ENCODE measurements at regions of chr9 and their contacts with region 1.

Region 1: DNA sequence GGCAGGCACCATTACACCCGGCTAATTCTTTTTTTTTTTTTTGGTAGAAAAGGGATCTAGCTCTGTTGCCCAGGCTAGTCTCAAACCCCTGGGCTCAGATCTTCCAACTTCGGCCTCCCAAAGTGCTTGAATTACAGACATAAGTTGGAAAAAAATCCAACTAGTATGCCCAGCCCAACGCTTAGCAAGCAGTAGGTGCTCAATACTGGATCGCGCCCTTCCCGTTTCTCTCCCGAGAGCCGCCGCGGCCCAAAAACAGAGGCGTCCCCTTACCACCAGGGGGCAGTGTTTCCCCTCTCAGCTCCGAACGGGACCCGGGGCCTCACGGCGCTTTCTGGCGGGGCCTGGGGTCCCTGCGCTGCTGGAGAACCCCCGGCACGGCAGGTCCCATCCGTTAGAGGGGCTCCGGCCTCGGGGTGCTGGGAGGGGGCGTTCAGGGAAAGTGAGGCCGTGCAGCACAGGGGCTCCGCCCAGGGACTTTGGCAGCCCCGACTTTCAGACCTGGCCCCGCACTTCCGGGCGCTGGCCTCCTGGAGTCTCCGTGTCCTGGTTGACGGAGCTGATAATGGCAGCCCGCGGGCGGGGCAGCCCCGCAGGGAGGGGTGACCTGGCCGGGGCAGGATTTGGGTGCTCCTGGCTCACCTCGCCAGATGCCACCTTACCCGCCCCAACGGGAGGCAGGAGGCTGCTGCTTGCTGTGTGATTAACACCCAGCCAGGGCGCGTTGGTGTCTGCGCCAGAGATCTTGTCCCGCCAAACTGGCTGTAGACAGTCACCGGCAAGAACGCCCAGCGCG is 15.2 kb downstream of the PTGES start:
- DNase-seq: peak; percentile 55
- ATAC-seq: peak; percentile 97
- H3K4me3 ChIP-seq: peak overlapping the region; percentile 30
- H3K27ac ChIP-seq: peak overlapping the region; percentile 68
- H3K4me1 ChIP-seq: peaks cover 3% of the 10 kb centered on the region
- H3K27me3 ChIP-seq: no peaks in the 10 kb centered on the region
- CTCF ChIP-seq: peak; percentile 89
- POLR2A ChIP-seq: 0 out of 2 replicates have a peak, but pooled peaks have one; percentile 20
- RAD21 ChIP-seq: peak; percentile 86

Region 2: DNA sequence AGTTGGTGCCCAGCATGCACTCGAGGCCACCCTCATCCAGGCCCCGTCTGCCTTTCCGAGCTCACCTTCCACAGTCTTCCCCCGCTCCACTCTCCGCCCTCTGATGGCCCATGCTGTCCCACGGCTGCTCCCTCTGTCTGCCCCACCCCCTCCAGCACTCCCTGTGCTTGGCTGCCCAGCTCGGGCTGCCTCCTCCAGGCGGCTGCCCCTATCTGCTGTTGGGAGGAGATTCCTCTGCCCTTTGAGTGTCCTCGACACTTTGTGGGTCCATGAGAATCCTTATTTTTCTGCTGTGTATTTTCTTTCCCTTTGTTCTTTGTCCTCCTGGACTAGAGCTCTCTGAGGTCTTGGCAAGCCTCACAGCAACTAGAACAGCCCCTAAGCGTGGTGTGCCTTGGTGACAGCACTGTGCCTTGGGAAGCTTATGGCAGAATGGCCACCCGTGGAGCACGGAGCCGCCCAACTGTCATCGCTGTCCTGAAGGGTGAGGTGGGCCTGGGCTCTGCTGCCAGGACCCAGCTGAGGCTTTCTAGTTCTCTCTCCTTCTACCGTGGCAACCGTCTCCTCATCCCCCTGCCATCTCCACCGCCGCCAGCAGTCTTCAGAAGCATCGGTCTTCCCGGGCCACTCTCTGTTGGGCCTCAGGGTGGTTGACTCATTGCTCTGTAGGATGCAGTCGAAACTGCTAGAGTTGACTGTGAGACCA is 106.6 kb before region 1 on chr9:
- CTCF ChIA-PET with region 1: no interaction called
- POLR2A ChIA-PET with region 1: no interaction called
- dilution Hi-C with region 1: no loop called
- in situ Hi-C with region 1: no loop called
- intact Hi-C with region 1: no loop called
- DNase-seq: peak; percentile 49
- ATAC-seq: no peak; the same call in 1 of the 2 replicates
- H3K4me3 ChIP-seq: no peak overlapping the region
- H3K27ac ChIP-seq: peak overlapping the region; percentile 43; the same call in 1 of the 2 replicates
- H3K4me1 ChIP-seq: peaks cover 40% of the 10 kb centered on the region
- H3K27me3 ChIP-seq: no peaks in the 10 kb centered on the region
- CTCF ChIP-seq: no peak
- POLR2A ChIP-seq: no peak
- RAD21 ChIP-seq: no peak

Region 3: DNA sequence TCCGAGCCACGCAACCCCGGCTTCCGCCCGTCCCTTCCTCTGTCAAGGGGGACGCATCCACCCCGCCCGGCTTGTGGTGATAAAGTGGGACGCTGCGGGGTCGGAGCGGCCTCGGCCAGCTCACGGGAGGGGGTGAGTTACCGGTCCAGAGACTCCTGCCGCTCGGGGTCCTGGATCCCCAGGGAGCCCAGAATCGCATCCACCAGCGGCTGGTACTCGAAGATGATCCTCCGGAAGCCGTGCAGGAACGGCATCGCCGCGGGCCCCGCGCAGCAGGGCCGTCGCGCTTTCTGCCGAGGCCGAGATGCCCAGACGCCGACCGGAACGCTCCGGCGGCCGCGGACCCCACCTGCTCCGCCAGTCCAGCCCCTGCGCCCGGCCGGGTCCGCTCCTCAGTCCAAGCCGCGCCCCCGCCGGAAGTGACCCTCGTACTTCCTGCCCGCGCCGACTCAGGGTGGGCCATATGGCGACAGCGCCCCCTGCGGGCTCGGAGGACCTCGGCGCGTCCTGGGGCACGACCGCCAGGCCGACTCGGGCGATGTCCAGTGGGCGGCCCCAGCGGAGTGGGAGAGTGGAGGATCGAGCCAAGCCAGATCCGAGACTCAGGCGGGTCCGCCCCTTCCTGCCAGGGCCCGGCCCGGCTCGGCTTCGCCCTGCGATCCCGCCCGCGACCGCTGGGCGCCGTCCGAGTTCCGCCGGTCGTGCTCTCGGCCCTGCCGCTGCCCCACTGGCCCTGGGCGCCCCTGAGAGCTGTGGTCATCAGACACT is 95.7 kb before region 1 on chr9 and contains the start of gene ASB6:
- CTCF ChIA-PET with region 1: interaction called, 4 read pairs
- POLR2A ChIA-PET with region 1: no interaction called
- dilution Hi-C with region 1: no loop called
- in situ Hi-C with region 1: no loop called
- intact Hi-C with region 1: loop called (anchors 1 kb)
- DNase-seq: peak; percentile 96
- ATAC-seq: peak; percentile 94
- H3K4me3 ChIP-seq: peak within 1 kb of the TSS; percentile 81
- H3K27ac ChIP-seq: peak within 1 kb of the TSS; percentile 92
- H3K4me1 ChIP-seq: peaks cover 15% of the 10 kb centered on the region
- H3K27me3 ChIP-seq: no peaks in the 10 kb centered on the region
- CTCF ChIP-seq: peak; percentile 98
- POLR2A ChIP-seq: peak; percentile 85
- RAD21 ChIP-seq: peak; percentile 96
- total RNA-seq, gene ASB6: 9.4 and 9.7 TPM in 2 replicates

Region 4: GRCh38 chr9:129726322-129727160 is 11.1 kb before region 1 on chr9:
- CTCF ChIA-PET with region 1: interaction called, 13 read pairs
- POLR2A ChIA-PET with region 1: no interaction called
- dilution Hi-C with region 1: no loop called
- in situ Hi-C with region 1: no loop called
- intact Hi-C with region 1: no loop called
- DNase-seq: peak; percentile 78
- ATAC-seq: peak; percentile 96
- H3K4me3 ChIP-seq: no peak overlapping the region
- H3K27ac ChIP-seq: peak overlapping the region; percentile 42; the same call in 1 of the 2 replicates
- H3K4me1 ChIP-seq: peaks cover 8% of the 10 kb centered on the region; the same call in 1 of the 2 replicates
- H3K27me3 ChIP-seq: no peaks in the 10 kb centered on the region
- CTCF ChIP-seq: peak; percentile 88
- POLR2A ChIP-seq: no peak
- RAD21 ChIP-seq: peak; percentile 77

Region 5: DNA sequence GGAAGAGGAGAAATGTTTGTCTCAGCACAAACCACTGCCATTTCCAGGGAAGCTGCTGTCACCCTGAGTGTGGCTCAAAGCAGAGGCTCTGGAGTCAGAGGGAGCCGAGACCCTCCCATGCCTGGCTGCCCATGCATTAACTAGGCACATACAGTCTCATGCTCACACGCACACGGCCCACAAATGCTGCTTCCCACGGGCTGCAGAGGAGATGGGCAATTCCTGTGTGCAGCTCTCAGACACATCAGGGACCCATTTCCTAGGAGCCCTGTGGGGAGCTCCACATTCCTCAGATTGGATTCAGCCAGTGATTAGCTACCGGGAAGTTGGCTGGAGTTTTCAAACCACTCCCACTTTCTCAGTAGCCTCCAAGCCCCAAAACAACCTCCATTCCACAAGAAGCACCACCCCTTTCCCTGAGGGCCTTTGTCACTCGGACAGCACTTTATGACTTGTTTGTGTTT is 24.3 kb after region 1 on chr9:
- CTCF ChIA-PET with region 1: interaction called, 13 read pairs
- POLR2A ChIA-PET with region 1: no interaction called
- dilution Hi-C with region 1: no loop called
- in situ Hi-C with region 1: no loop called
- intact Hi-C with region 1: no loop called
- DNase-seq: peak; percentile 83
- ATAC-seq: peak; percentile 66
- H3K4me3 ChIP-seq: no peak overlapping the region
- H3K27ac ChIP-seq: peak overlapping the region; percentile 98
- H3K4me1 ChIP-seq: peaks cover 18% of the 10 kb centered on the region
- H3K27me3 ChIP-seq: no peaks in the 10 kb centered on the region
- CTCF ChIP-seq: no peak
- POLR2A ChIP-seq: no peak
- RAD21 ChIP-seq: no peak

Region 6: DNA sequence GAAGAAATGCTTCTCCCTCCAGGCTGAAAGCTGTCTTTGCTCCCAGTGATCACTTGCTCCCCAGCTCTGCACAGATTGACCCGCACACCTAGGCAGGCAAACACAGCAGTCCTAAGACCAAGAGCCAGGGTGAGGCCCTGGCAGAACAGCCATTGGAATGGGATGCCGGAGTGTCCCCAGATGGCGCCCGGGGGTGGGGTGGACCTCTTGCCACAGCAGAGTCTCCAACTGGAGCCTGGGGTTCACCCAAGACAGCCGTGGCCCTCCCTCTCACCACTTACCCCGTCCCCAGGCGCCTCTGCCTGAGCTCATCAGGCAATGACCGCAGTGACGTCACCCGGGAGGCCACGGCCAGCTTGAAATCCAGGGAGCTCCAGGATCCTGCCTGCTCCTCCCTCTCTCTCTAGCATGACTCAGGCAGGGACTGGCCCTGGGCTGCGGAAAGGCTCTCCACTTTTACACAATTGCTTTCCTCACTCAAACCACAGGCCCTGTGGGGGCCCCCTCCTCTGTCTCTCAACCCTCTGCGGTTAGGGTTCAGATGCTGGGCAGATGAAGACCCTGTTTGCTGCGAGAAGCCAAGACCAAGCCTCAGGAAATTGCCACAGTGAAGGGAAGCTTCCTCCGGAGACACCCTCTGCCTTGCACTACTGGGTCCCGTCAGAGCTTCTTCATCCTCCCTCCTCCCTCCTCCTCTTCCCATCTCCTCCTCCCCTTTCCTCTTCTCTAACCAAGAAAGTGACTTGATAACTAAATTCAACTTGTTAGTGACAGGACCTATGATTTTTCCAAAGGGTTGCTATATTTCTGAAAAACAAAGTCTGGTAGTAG is 39.5 kb after region 1 on chr9:
- CTCF ChIA-PET with region 1: interaction called, 17 read pairs
- POLR2A ChIA-PET with region 1: no interaction called
- dilution Hi-C with region 1: no loop called
- in situ Hi-C with region 1: loop called (anchors 5 kb)
- intact Hi-C with region 1: no loop called
- DNase-seq: peak; percentile 100
- ATAC-seq: peak; percentile 95
- H3K4me3 ChIP-seq: peak overlapping the region; percentile 1; the same call in 1 of the 2 replicates
- H3K27ac ChIP-seq: peak overlapping the region; percentile 85
- H3K4me1 ChIP-seq: peaks cover 21% of the 10 kb centered on the region
- H3K27me3 ChIP-seq: no peaks in the 10 kb centered on the region
- CTCF ChIP-seq: no peak
- POLR2A ChIP-seq: peak; percentile 29
- RAD21 ChIP-seq: peak; percentile 30

Region 7: GRCh38 chr9:129783516-129784361 is 46.1 kb after region 1 on chr9:
- CTCF ChIA-PET with region 1: interaction called, 14 read pairs
- POLR2A ChIA-PET with region 1: no interaction called
- dilution Hi-C with region 1: no loop called
- in situ Hi-C with region 1: loop called (anchors 5 kb)
- intact Hi-C with region 1: loop called (anchors 1 kb)
- DNase-seq: peak; percentile 75
- ATAC-seq: peak; percentile 96
- H3K4me3 ChIP-seq: no peak overlapping the region
- H3K27ac ChIP-seq: no peak overlapping the region
- H3K4me1 ChIP-seq: peaks cover 3% of the 10 kb centered on the region; the same call in 1 of the 2 replicates
- H3K27me3 ChIP-seq: peaks cover 10% of the 10 kb centered on the region
- CTCF ChIP-seq: peak; percentile 96
- POLR2A ChIP-seq: peak; percentile 66
- RAD21 ChIP-seq: peak; percentile 100

Region 8: GRCh38 chr9:130088051-130088450 is 350.4 kb after region 1 on chr9:
- CTCF ChIA-PET with region 1: no interaction called
- POLR2A ChIA-PET with region 1: no interaction called
- dilution Hi-C with region 1: no loop called
- in situ Hi-C with region 1: no loop called
- intact Hi-C with region 1: no loop called
- DNase-seq: no peak
- ATAC-seq: no peak
- H3K4me3 ChIP-seq: no peak overlapping the region
- H3K27ac ChIP-seq: no peak overlapping the region
- H3K4me1 ChIP-seq: no peaks in the 10 kb centered on the region
- H3K27me3 ChIP-seq: no peaks in the 10 kb centered on the region
- CTCF ChIP-seq: no peak
- POLR2A ChIP-seq: no peak
- RAD21 ChIP-seq: no peak

Region 9: DNA sequence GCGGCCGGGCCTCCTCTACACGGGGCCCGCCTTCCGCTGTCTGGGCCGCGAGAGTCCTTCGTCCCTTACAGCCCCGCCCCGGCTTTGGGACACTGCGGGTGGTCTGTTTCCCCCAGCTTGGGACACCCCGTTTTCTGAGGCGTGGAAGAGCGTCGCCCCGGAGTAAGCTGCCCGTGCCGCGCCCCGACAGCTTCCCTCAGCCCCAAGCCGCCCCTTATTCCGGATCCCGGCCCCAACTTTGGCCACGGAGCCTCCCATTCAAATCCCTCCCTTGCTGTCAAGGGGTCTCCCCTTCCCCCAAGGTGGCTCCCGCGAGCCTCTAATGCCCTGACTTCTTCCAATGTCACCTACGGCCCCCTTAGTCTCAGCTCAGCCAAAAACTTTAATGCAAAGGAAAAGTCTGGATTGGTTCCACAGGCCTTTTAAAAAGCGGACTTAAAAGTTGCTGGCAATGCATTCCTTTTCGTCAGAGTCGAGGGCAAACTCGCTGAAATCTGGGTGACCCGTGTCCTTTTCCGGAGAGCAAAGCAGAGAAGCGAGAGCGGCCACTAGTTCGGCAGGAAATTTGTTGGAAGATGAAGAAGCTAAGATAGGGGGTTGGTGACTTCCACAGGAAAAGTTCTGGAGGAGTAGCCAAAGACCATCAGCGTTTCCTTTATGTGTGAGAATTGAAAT is 975.7 kb after region 1 on chr9:
- CTCF ChIA-PET with region 1: no interaction called
- POLR2A ChIA-PET with region 1: no interaction called
- dilution Hi-C with region 1: no loop called
- in situ Hi-C with region 1: no loop called
- intact Hi-C with region 1: no loop called
- DNase-seq: peak; percentile 34
- ATAC-seq: peak; percentile 0; the same call in 1 of the 2 replicates
- H3K4me3 ChIP-seq: peak overlapping the region; percentile 60
- H3K27ac ChIP-seq: peak overlapping the region; percentile 88
- H3K4me1 ChIP-seq: peaks cover 2% of the 10 kb centered on the region; the same call in 1 of the 2 replicates
- H3K27me3 ChIP-seq: no peaks in the 10 kb centered on the region
- CTCF ChIP-seq: no peak
- POLR2A ChIP-seq: peak; percentile 49
- RAD21 ChIP-seq: no peak